Endothelial cell of umbilical vein (primary cell): ENCODE measurements at regions of chr11 and their contacts with region 1.

Region 1: GRCh38 chr11:6682936-6683861 is at the start of gene MRPL17:
- DNase-seq: peak; percentile 100
- H3K4me3 ChIP-seq: peak within 1 kb of the TSS; percentile 54 to 91 (median 61)
- H3K27ac ChIP-seq: peak within 1 kb of the TSS; percentile 82
- H3K4me1 ChIP-seq: peaks cover 22% of the 10 kb centered on the region
- H3K27me3 ChIP-seq: no peaks in the 10 kb centered on the region
- CTCF ChIP-seq: peak; percentile 94 to 95
- POLR2A ChIP-seq: peak; percentile 97
- total RNA-seq, gene MRPL17: 86.8 and 87.2 TPM in 2 replicates

Region 2: GRCh38 chr11:6523253-6523652 is 159.9 kb before region 1 on chr11:
- CTCF ChIA-PET with region 1: no interaction called
- POLR2A ChIA-PET with region 1: no interaction called
- dilution Hi-C with region 1: no loop called
- intact Hi-C with region 1: loop called (anchors 2 kb)
- DNase-seq: peak; percentile 53
- H3K4me3 ChIP-seq: no peak overlapping the region
- H3K27ac ChIP-seq: no peak overlapping the region
- H3K4me1 ChIP-seq: peaks cover 10% of the 10 kb centered on the region
- H3K27me3 ChIP-seq: no peaks in the 10 kb centered on the region
- CTCF ChIP-seq: no peak
- POLR2A ChIP-seq: no peak

Region 3: DNA sequence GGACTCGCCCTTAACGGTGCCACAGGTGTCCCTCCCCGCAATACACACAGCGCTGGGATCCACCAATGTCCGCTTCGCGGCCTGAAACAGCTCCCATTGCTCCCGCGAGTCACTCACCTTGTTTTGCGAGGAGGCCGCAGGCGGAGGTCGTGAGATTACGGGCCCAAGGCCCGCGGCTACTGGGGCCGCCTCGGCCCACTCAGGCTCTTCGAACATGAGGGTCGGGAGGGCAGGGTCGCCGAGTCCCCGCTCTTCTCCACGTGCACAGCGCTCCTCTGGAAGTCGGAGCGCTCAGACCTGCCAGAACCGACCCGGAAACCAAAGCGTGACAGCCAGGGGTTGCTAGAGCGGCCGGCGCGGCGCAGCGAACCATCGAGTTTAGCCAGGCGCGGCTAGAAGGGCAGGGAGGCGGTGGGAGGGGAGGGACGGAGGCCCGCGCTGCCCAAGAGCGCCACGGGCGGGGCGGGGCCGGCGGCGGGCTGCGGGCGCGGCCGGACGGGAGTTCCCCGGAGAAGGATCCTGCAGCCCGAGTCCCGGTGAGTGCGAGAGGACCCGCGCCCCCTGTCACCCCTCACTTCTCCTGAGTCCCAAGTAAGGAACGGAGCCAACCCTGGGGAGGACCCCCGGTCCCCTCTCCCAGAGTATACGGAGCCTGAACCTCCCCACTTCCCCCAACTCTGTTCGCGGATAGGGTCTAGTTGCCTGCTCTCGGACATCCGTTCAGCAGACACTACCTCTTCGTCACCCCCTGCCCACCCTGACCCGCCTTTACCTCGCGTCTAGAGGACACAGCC is 79.7 kb before region 1 on chr11 and contains the starts of genes ILK and RRP8:
- CTCF ChIA-PET with region 1: interaction called, 13 read pairs
- POLR2A ChIA-PET with region 1: interaction called, 6 read pairs
- dilution Hi-C with region 1: no loop called
- intact Hi-C with region 1: loop called (anchors 1 kb)
- DNase-seq: peak; percentile 93
- H3K4me3 ChIP-seq: peak within 1 kb of the TSS; percentile 62 to 97 (median 90)
- H3K27ac ChIP-seq: peak within 1 kb of the TSS; percentile 83
- H3K4me1 ChIP-seq: peaks cover 44% of the 10 kb centered on the region
- H3K27me3 ChIP-seq: no peaks in the 10 kb centered on the region
- CTCF ChIP-seq: no peak
- POLR2A ChIP-seq: peak; percentile 87
- total RNA-seq, gene ILK: 221 and 233 TPM in 2 replicates
- total RNA-seq, gene RRP8: 19.4 and 23.3 TPM in 2 replicates

Region 4: GRCh38 chr11:6619004-6619745 is 64.0 kb before region 1 on chr11 and contains the start of gene TPP1:
- CTCF ChIA-PET with region 1: interaction called, 35 read pairs
- POLR2A ChIA-PET with region 1: interaction called, 5 read pairs
- dilution Hi-C with region 1: no loop called
- intact Hi-C with region 1: loop called (anchors 1 kb)
- DNase-seq: peak; percentile 97
- H3K4me3 ChIP-seq: peak within 1 kb of the TSS; percentile 26 to 88 (median 87)
- H3K27ac ChIP-seq: peak within 1 kb of the TSS; percentile 68
- H3K4me1 ChIP-seq: peaks cover 33% of the 10 kb centered on the region
- H3K27me3 ChIP-seq: no peaks in the 10 kb centered on the region
- CTCF ChIP-seq: no peak
- POLR2A ChIP-seq: peak; percentile 92
- total RNA-seq, gene TPP1: 101 and 124 TPM in 2 replicates

Region 5: DNA sequence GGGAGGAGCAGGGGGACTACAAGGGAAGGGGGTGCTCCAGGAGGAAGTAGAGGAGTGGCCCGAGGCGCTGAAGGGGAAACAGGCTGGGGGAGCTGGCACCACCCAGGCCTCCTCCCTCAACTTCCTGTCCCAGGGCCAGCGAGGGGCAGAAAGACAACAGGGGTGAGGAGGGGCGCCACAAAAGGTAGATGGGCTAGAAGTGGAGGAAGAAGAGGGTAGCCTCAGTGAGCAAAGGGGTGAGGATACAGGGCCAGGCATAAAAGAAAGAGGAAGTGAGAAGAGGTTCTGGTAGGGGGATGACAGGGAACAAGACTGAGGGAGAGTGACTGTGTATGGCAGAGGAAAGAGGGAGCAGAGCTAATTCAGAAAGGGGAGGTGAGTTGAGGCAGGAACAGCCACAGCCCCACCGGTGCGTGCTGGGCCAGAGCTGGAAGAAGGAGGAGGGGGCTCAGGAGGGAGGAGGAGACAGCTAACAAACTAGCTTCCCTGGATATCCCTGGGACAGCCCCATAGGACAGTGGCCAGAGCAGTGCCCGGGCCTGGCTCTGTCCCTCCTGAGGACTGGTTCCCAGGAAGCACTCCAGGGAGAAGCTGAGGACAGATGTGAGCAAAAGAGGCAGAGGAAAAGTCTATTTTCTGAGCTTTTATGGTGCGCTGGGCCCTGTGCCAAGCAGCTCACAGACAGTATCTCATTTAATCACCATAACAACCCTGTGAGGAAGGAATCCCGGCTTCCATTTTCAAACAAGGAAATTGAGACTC is 36.1 kb before region 1 on chr11:
- CTCF ChIA-PET with region 1: interaction called, 4 read pairs
- POLR2A ChIA-PET with region 1: no interaction called
- dilution Hi-C with region 1: no loop called
- intact Hi-C with region 1: loop called (anchors 1 kb)
- DNase-seq: peak; percentile 67
- H3K4me3 ChIP-seq: no peak overlapping the region
- H3K27ac ChIP-seq: peak overlapping the region; percentile 84
- H3K4me1 ChIP-seq: peaks cover 37% of the 10 kb centered on the region
- H3K27me3 ChIP-seq: no peaks in the 10 kb centered on the region
- CTCF ChIP-seq: no peak
- POLR2A ChIP-seq: no peak

Region 6: DNA sequence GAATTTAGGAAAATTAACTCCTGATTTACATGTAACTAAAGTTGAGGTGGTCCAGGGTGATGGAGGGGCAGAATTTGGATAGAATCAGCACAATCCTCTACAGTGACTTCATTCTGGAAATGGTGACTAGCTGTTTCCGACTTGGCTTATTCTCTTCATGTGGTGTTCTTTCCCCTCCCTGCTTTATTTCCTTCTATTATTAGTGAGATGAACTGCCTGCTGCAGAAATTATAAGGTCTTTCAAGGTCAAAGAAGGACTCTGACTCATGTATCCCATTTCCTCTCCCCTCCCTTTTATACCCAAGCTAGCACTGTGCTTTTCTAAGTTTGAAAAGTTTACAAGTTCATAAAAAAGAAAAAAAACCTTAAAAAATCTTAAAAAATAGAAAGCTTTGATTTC is 12.2 kb after region 1 on chr11:
- CTCF ChIA-PET with region 1: interaction called, 13 read pairs
- POLR2A ChIA-PET with region 1: interaction called, 4 read pairs
- dilution Hi-C with region 1: no loop called
- intact Hi-C with region 1: loop called (anchors 1 kb)
- DNase-seq: peak; percentile 95
- H3K4me3 ChIP-seq: peak overlapping the region in 1 of 3 experiments; percentile 6
- H3K27ac ChIP-seq: peak overlapping the region; percentile 88
- H3K4me1 ChIP-seq: peaks cover 31% of the 10 kb centered on the region
- H3K27me3 ChIP-seq: no peaks in the 10 kb centered on the region
- CTCF ChIP-seq: no peak
- POLR2A ChIP-seq: no peak